ENCODE measurements at regions of chr16 and their contacts with region 1.

Region 1: DNA sequence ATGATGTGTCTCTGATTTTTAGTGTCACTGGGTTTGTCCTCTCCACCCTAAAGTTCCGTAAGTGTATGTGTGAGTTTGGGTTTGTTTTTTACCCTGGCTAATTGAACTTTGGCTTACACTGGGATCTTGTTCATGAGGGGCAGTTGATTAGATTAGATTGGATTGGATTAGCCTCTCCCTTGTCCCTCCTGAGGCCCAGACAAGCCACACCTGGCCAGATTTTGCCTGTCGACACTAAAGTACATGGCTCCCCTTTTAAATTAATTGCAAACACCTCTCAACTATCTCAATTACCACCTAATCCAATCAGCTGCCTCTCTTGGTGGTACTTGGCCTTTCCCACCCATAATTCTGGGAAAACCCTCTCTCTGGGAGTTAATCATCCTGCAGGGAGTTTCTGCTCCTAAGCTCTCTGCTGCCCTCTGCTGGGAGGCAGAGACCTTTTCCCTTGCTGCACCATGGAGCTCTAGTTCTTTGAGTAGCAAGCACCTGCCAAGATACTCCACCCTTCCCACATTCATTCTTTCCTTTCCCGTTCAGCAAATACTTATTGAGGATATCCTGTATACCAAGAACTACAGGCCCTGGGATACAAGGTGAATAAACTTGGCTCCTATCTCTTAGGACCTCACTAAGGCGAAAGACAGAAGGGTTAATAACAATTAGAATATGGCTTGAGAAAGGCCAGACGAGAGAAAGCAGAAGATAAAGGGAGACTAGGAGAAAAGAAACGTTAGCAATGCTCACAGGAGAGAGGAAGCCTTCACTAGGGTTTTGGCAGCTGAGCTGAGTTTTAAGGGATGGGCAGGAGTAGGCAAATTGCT is 60.0 kb upstream of the MPHOSPH6 start:
- DNase-seq: peak; percentile 90
- H3K4me3 Mint-ChIP-seq: no peak overlapping the region
- H3K27ac Mint-ChIP-seq: no peak overlapping the region
- H3K4me1 Mint-ChIP-seq: peaks cover 6% of the 10 kb centered on the region
- H3K27me3 Mint-ChIP-seq: peaks cover 68% of the 10 kb centered on the region
- CTCF ChIP-seq: peak; percentile 96

Region 2: GRCh38 chr16:81885976-81886586 is 343.9 kb before region 1 on chr16:
- CTCF ChIA-PET with region 1: interaction called, 8 read pairs
- intact Hi-C with region 1: loop called (anchors 1 kb)
- DNase-seq: peak; percentile 75
- H3K4me3 Mint-ChIP-seq: no peak overlapping the region
- H3K27ac Mint-ChIP-seq: no peak overlapping the region
- H3K4me1 Mint-ChIP-seq: no peaks in the 10 kb centered on the region
- H3K27me3 Mint-ChIP-seq: peaks cover 72% of the 10 kb centered on the region
- CTCF ChIP-seq: peak; percentile 79

Region 3: DNA sequence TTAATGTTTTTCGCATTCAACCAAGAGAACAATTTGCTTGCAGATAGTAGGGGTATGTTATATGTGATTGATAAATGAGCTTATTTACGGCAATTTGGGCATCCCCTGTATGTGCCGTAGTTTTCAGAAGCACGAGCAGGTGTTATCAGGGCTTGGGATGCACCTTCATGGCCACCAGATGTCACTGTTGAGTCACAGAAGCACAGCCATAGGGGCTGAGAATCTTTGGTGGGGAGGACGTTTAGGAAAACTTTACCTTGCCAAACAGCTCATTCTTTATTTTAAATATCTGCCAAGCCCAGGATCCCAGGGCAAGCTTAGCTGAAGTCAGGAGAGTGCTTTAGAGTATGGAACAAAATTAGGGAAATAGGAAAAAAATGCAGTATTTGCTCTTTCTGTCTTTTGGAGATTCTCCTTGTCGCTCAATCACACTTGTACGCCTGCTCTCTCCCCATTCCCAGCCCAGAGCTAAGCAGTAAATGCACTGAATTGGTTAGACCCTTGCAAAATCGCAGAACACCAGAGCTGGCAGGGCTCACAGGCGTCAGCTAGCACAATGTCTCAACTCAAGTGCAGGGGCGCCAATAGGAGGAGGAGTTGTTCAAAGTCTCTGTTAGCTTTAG is 33.6 kb after region 1 on chr16:
- CTCF ChIA-PET with region 1: no interaction called
- intact Hi-C with region 1: no loop called
- DNase-seq: peak; percentile 66
- H3K4me3 Mint-ChIP-seq: no peak overlapping the region
- H3K27ac Mint-ChIP-seq: no peak overlapping the region
- H3K4me1 Mint-ChIP-seq: no peaks in the 10 kb centered on the region
- H3K27me3 Mint-ChIP-seq: peaks cover 98% of the 10 kb centered on the region
- CTCF ChIP-seq: peak; percentile 90